ENCODE measurements at regions of chr12 and their contacts with region 1.

Region 1: DNA sequence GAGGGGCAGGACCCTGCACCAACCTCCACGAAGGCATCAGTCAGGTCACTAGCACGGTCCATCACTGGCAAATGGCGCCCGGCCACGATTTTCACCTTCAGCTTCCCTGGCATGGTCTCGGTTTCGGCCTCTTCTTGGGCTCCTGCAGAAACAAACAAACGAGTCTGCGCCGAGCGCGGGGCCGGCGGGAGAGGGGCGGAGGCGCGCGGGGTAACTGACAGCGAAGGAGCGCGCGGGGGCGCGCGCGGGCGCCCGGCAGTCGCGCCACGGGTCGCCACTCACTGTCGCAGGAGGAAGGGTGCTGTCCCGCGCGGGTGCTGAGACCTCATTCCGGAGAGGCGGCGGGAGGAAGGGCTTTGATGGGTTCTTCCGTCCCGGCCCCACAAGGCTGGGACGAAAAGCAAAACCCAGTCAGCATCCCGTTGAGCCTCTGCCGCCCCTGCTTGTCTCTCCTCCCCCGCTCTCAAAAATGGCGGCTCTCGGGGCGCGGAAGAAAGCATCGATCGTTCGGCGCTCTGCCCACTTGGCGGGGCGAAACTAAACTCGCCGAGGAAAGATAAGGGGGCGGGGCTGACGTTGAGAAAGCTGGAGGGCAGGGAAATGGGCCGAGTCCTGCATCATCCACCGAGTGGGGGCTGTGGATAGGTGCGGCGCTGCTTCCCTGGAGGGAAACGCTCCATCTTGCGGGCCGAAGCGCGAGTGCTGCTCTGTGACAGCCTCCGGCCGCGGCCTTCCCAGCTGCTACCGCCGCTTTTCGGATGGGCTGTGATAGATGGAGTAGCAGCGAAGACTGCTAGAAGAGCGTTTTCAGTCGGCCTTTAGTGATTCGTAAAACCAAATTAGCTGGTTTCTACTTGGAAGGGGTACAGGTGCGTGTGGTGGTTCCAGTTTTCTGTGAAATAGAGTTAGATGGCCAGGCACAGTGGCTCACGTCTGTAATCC is at the start of gene C2CD5:
- DNase-seq: peak; percentile 69
- ATAC-seq: peak; percentile 96
- H3K4me3 ChIP-seq: peak within 1 kb of the TSS; percentile 64 to 73
- H3K27ac ChIP-seq: peak within 1 kb of the TSS; percentile 84
- H3K4me1 ChIP-seq: no peaks in the 10 kb centered on the region
- H3K27me3 ChIP-seq: no peaks in the 10 kb centered on the region
- CTCF ChIP-seq: peak; percentile 55
- total RNA-seq, gene C2CD5: 15.9 TPM

Region 2: DNA sequence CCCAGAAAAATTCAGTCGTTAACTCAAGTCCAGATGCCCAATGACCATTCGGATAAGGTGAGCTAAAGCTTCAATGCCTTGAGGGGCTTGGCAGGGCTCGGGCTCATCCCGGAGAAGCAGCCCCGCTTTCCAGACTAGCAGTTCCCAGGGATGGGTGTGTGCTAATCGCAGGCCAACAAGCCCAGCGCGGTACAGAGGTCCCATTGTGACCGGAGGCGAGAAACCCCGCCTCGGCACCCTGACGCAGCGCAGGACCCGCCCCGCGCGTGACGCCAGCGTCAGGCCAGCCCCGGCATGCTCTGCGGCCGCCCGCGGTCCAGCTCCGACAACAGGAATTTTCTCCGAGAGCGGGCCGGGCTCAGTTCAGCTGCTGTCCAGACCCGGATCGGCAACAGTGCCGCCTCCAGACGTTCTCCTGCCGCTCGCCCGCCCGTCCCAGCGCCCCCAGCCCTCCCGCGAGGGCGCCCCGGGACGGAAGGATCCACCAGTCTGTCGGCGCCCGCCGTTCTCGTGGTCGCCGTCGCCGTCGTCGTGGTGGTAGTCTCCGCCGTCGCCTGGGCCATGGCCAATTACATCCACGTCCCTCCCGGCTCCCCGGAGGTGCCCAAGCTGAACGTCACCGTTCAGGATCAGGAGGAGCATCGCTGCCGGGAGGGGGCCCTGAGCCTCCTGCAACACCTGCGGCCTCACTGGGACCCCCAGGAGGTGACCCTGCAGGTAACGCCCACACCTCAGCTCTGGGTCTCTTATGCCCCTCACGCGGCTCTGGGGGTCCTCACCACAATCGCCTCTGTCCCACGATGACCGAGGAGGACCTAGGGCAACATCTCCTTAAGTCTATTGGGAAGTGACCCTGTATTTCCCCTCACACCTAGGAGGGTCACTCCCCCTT is 80.8 kb after region 1 on chr12 and contains the start of gene ETNK1:
- CTCF ChIA-PET with region 1: no interaction called
- POLR2A ChIA-PET with region 1: interaction called, 3 read pairs
- in situ Hi-C with region 1: no loop called
- intact Hi-C with region 1: loop called (anchors 5 kb)
- DNase-seq: no peak
- ATAC-seq: peak; percentile 100
- H3K4me3 ChIP-seq: peak within 1 kb of the TSS; percentile 92 to 98
- H3K27ac ChIP-seq: peak within 1 kb of the TSS; percentile 97
- H3K4me1 ChIP-seq: peaks cover 13% of the 10 kb centered on the region; the same call in 1 of the 2 replicates
- H3K27me3 ChIP-seq: no peaks in the 10 kb centered on the region
- CTCF ChIP-seq: no peak
- total RNA-seq, gene ETNK1: 43.1 TPM

Region 3: DNA sequence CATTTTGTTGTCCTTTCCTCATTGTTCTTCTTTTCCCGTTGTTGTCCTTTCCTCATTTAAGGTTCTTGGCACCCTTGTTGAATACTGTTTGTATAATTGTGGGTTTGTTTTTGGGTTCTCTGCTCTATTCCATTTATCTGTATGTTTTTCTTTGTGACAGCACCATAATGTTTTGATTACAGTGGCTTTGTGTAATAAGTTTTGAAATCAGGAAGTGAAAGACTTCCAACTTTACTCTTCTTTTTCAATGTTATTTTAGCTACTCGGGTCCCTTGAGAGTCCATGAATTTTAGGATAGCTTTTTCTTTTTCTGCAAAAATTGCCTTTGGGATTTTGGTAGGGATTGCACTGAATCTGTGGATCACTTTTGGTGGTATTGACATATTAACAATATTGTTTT is 108.8 kb after region 1 on chr12:
- CTCF ChIA-PET with region 1: no interaction called
- POLR2A ChIA-PET with region 1: no interaction called
- in situ Hi-C with region 1: no loop called
- intact Hi-C with region 1: no loop called
- DNase-seq: no peak
- ATAC-seq: no peak
- H3K4me3 ChIP-seq: no peak overlapping the region
- H3K27ac ChIP-seq: no peak overlapping the region
- H3K4me1 ChIP-seq: no peaks in the 10 kb centered on the region
- H3K27me3 ChIP-seq: no peaks in the 10 kb centered on the region
- CTCF ChIP-seq: no peak

Region 4: DNA sequence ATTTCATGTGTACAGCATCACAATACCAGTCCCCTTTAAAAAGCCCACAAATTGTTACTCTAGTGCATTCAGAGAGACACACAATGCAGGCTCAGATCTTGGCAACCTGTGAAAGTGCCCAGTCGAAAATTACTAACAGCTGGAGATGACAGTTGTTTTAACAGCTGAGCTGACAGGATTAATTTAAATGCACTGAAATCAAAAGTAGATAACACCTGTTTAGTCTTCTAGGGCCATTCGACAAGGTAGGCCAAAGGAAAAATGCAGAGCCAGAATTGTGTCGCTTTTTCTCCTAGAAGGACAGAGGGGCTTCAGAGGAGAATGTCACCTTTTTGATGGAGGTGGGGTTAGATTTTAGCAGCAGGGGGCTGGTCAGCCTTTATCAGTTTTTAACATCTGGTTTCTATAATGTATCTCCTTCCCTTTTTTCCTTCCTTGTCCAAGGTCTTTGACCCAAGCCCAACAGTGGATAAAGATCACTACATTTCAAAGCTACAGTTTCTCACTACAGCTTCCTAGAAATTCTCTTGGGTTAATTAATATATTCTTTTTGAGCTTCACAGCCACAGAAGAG is 1266.1 kb after region 1 on chr12:
- CTCF ChIA-PET with region 1: no interaction called
- POLR2A ChIA-PET with region 1: no interaction called
- in situ Hi-C with region 1: no loop called
- intact Hi-C with region 1: no loop called
- DNase-seq: no peak
- ATAC-seq: no peak
- H3K4me3 ChIP-seq: no peak overlapping the region
- H3K27ac ChIP-seq: no peak overlapping the region
- H3K4me1 ChIP-seq: no peaks in the 10 kb centered on the region
- H3K27me3 ChIP-seq: no peaks in the 10 kb centered on the region
- CTCF ChIP-seq: no peak

Measured in Panc1 (cell line).